ENCODE measurements at regions of chr1 and their contacts with region 1.

Region 1: DNA sequence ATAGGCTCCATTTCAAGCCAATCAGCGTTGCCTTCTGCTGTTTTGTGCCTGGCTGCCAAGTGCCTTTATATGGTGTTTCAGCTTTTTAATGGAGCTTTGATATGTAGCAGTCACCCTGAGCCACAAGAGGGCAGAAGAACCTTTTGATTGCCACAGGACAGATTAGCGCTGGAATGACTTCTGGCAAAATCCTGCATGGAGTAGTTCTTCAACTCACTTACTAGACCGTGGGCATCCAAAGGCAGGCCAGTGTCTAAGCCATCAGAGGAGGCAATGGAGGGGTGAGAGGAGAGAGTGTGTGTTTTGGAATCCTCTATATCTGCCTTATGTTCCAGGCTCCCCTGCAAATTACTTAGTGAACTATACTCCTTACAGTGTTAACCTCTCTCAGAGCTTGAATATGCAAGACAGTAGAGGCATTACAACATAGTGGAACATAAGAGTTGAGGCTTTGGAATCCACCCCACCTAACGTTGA is 56.2 kb downstream of the ST3GAL3 start:
- DNase-seq: peak; percentile 45 to 72 (median 48)
- ATAC-seq: peak; percentile 95
- H3K4me3 ChIP-seq: no peak overlapping the region
- H3K27ac ChIP-seq: no peak overlapping the region
- H3K4me1 ChIP-seq: no peaks in the 10 kb centered on the region
- H3K27me3 ChIP-seq: no peaks in the 10 kb centered on the region

Region 2: DNA sequence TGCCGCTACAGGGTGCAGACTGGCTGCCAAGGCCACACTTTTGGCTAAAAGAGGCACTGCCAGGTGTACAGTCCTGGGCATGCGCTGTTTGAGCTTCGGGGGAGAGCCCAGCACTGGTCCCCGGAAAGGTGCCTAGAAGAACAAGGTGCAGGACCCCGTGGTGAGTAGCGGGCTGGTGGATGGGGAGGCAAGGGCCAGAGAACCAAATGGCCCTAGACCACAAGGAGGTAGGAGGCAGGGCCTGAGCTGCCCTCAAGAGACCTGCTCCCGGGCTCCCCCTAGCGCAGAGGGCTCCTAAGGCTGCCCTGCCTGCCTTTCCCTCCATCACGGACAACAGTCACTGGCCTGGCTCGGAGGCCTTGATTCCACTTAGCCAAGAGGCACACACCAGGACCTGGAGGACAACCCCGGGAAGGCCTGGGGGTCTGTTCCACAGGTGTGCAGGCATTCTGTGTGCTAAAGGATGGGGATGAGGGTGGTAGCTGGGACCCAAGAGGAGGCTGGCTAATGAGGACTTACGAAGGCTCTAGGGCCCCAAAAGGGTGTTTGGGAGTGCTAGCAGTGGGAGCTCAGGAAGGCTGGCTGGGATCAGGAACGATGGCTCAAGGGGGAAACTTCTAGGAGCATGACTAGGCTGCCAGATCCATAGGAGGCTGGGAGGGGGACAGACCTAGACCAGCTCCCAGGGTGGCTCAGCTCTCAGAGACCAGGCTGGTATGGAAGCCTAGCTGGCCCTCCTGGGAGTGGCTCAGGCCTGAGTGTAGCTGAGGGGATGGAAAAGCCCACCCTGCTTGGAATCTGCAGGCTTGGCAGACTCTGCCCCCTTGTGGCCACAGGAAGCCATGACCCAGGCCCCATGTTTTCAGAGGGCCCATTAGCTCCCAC is 170.8 kb after region 1 on chr1:
- intact Hi-C with region 1: loop called (anchors 2 to 5 kb)
- DNase-seq: peak in 2 of 3 donors; percentile 80 to 81
- ATAC-seq: peak; percentile 31 to 53
- H3K4me3 ChIP-seq: no peak overlapping the region
- H3K27ac ChIP-seq: no peak overlapping the region
- H3K4me1 ChIP-seq: peaks cover 4% of the 10 kb centered on the region
- H3K27me3 ChIP-seq: no peaks in the 10 kb centered on the region

Region 3: GRCh38 chr1:44029906-44030604 is 266.5 kb after region 1 on chr1:
- intact Hi-C with region 1: loop called in 3 of 4 experiments (anchors 5 to 10 kb)
- DNase-seq: peak; percentile 92 to 96 (median 94)
- ATAC-seq: peak; percentile 91 to 93
- H3K4me3 ChIP-seq: peak overlapping the region; percentile 74
- H3K27ac ChIP-seq: peak overlapping the region; percentile 41
- H3K4me1 ChIP-seq: peaks cover 1% of the 10 kb centered on the region
- H3K27me3 ChIP-seq: no peaks in the 10 kb centered on the region

Region 4: DNA sequence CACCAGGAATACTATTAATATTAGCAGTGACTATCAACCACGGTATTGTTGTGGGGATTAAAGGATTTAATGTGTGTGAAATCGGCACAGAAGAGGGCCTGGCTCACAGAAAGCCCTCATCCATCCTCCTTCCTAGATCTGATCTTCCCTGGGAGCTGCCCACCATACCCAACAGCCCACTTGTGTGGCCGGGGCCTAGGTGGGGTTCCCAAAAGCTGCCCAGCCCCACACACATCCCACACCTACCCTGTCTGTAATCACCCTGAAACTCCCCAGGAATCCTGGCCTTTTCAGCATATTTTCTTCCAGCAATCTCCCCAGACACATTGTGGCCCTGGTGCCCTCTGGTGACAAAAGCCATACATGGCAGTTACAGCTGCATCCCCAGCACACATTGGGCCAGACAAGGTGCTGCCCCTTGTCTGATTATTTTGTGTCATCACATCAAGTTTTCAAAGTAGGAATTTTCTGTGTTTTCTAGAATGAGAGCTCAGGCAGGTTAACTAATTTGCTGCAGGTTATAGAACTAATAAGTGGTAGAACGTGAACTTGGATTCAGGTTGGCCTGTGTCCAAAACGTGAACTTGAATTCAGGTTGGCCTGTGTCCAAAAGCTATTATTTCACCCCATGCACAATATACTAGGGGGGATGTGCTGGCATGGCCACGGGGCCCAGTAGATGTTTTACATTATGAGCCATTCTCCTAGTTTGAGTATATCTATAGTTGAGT is 273.0 kb after region 1 on chr1:
- intact Hi-C with region 1: loop called in 3 of 4 experiments (anchors 5 to 10 kb)
- DNase-seq: peak; percentile 67 to 80 (median 76)
- ATAC-seq: peak; percentile 58 to 72
- H3K4me3 ChIP-seq: no peak overlapping the region
- H3K27ac ChIP-seq: no peak overlapping the region
- H3K4me1 ChIP-seq: peaks cover 9% of the 10 kb centered on the region
- H3K27me3 ChIP-seq: no peaks in the 10 kb centered on the region

Region 5: GRCh38 chr1:45430490-45430889 is 1667.0 kb after region 1 on chr1:
- intact Hi-C with region 1: no loop called
- DNase-seq: no peak
- ATAC-seq: no peak
- H3K4me3 ChIP-seq: no peak overlapping the region
- H3K27ac ChIP-seq: no peak overlapping the region
- H3K4me1 ChIP-seq: no peaks in the 10 kb centered on the region
- H3K27me3 ChIP-seq: no peaks in the 10 kb centered on the region

Measured in right cardiac atrium (tissue), 5 donors.